T-cell (primary cell): ENCODE measurements at regions of chr7 and their contacts with region 1.

Region 1: DNA sequence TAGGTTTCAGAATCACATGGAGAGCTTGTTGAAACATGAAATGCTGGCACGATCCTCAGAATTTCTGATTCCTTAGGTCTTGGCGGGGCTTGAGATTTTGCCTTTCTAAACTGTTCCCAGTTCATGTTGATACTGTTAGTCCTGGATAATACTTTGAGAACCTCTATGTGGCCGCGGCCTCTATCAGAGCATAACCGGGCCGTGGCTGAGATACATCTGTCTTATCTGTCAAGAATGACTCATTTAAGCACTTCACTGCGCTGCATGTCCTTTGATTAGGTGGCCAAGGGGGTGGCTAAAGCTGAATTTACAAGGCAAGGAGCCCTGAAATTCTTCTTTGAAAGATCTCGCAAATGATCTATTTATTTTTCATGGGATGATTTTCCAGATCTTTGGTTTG is 66.9 kb downstream of the GALNT17 start:
- DNase-seq: no peak
- ATAC-seq: no peak
- H3K4me3 ChIP-seq: no peak overlapping the region
- H3K4me3 Mint-ChIP-seq: no peak overlapping the region
- H3K27ac ChIP-seq: no peak overlapping the region
- H3K27ac Mint-ChIP-seq: no peak overlapping the region
- H3K4me1 ChIP-seq: no peaks in the 10 kb centered on the region
- H3K4me1 Mint-ChIP-seq: no peaks in the 10 kb centered on the region
- H3K27me3 ChIP-seq: no peaks in the 10 kb centered on the region
- H3K27me3 Mint-ChIP-seq: no peaks in the 10 kb centered on the region

Region 2: DNA sequence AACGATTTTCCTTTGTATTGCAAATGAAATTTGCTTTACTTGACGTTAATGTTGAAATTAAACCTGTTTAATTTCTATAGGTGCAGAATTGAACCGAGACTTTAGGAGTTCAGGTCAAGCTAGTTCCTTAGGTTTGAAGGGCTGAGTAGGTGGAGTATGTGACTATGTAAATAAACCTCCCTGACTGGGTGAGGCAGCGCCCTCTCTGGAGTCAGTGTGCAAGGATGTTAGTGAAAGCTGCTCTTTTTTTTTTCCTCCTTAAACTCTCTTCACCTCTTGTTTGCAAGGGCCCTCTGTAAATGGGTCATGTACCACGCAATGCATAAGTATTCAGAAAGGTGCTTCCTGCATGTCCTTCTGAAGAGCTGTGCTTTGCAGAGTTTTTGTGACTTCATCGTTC is 33.2 kb before region 1 on chr7:
- CTCF ChIA-PET with region 1: interaction called in 1 of 2 experiments, 11 read pairs
- POLR2A ChIA-PET with region 1: no interaction called
- DNase-seq: no peak
- ATAC-seq: no peak
- H3K4me3 ChIP-seq: no peak overlapping the region
- H3K4me3 Mint-ChIP-seq: no peak overlapping the region
- H3K27ac ChIP-seq: no peak overlapping the region
- H3K27ac Mint-ChIP-seq: no peak overlapping the region
- H3K4me1 ChIP-seq: no peaks in the 10 kb centered on the region
- H3K4me1 Mint-ChIP-seq: no peaks in the 10 kb centered on the region
- H3K27me3 ChIP-seq: no peaks in the 10 kb centered on the region
- H3K27me3 Mint-ChIP-seq: no peaks in the 10 kb centered on the region